ENCODE measurements at regions of chr12 and their contacts with region 1.

Region 1: DNA sequence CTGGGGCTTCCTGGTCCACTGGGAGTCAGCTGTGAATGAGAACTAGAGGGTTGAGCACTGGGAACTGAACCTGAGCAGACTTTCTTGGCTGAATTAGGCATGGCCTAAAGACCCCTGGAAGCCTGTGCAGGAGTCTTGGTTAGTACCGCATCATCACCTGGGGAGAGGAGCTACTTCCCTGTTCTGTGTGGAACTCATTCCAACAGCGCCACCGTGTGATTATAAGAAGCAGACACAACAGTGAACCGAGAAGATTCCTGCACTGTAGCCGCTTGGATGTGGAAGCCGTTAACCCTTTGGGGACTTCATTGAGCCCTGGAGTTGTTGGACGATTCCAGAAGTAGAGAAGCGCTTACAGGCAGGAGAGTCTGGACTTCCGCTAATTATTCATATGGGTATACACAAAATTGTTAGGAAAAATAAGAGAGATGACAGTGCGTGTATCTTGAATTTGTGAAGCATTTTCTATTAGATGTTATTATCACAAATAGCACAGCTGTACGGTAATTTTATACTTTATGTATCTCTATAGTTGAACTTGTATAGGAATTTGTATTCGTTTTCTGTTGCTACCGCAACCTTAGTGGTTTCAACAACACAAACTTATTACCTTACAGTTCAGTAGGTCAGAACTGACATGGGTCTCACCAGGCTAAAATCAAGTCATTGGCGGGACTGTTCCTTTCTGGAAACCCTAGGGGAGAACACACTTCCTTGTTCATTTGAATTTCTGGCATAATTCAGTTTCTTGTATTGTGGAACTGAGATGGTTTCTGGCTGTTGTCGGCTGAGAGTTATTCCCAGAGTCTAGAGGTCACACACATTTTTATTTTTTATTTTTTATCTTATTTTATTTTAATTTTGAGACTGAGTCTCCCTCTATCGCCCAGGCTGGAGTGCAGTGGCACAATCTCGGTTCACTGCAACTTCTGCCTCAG is 100.7 kb downstream of the C2CD5 start:
- DNase-seq: no peak
- H3K4me3 ChIP-seq: no peak overlapping the region
- H3K27ac ChIP-seq: no peak overlapping the region
- H3K4me1 ChIP-seq: peaks cover 0 to 9% (median 3%) of the 10 kb centered on the region in 4 donors
- H3K27me3 ChIP-seq: no peaks in the 10 kb centered on the region
- CTCF ChIP-seq: peak; percentile 68 to 84 (median 79)
- EP300 ChIP-seq: no peak
- POLR2A ChIP-seq: no peak

Region 2: GRCh38 chr12:22083167-22083566 is 360.5 kb before region 1 on chr12:
- intact Hi-C with region 1: loop called (anchors 2 kb)
- DNase-seq: no peak
- H3K4me3 ChIP-seq: no peak overlapping the region
- H3K27ac ChIP-seq: no peak overlapping the region
- H3K4me1 ChIP-seq: no peaks in the 10 kb centered on the region
- H3K27me3 ChIP-seq: no peaks in the 10 kb centered on the region
- CTCF ChIP-seq: peak; percentile 59 to 66 (median 60)
- EP300 ChIP-seq: no peak
- POLR2A ChIP-seq: no peak

Region 3: DNA sequence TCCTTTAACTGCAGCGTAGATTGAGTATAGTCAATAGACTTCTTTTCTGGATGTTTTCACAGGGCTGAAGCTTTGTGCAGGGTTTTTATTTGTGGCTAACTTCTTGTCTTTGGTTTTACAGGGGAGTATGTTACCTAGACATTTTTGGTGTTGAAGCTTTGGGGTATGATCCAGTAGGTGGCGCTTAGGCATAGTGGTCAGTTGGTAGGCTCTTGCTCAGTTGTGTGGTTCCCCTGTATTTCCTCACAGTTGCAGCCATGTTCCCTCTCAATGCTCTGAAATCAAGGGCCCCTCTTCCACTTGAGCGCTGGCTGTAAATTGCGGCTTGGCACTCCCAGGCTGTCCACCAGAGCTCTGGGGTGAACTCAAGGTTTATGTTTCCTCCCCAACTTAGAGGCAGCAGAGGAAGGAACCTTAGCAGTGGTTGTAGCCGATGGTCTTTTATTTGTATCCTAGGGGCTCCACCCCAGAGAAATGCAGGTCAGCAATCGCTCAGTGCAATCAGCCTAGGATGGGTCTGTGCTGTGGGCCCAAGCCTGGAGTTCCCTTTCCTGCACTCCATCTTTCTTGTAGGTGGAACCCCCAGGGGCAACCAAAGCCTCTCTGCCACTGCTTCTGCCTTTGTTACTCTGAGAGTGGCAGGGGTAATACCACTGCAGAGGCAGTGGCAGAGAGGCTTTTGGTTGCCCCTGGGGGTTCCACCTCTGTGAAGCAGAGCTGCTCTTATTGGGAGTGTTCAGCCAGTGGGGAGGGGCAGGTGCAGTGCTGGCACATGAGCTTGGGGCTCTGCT is 342.5 kb before region 1 on chr12:
- intact Hi-C with region 1: loop called (anchors 5 kb)
- DNase-seq: no peak
- H3K4me3 ChIP-seq: no peak overlapping the region
- H3K27ac ChIP-seq: no peak overlapping the region
- H3K4me1 ChIP-seq: no peaks in the 10 kb centered on the region
- H3K27me3 ChIP-seq: no peaks in the 10 kb centered on the region
- CTCF ChIP-seq: peak; percentile 39 to 53 (median 44)
- EP300 ChIP-seq: no peak
- POLR2A ChIP-seq: no peak